Mammary epithelial cell (primary cell): ENCODE measurements at regions of chr17 and their contacts with region 1.

Region 1: DNA sequence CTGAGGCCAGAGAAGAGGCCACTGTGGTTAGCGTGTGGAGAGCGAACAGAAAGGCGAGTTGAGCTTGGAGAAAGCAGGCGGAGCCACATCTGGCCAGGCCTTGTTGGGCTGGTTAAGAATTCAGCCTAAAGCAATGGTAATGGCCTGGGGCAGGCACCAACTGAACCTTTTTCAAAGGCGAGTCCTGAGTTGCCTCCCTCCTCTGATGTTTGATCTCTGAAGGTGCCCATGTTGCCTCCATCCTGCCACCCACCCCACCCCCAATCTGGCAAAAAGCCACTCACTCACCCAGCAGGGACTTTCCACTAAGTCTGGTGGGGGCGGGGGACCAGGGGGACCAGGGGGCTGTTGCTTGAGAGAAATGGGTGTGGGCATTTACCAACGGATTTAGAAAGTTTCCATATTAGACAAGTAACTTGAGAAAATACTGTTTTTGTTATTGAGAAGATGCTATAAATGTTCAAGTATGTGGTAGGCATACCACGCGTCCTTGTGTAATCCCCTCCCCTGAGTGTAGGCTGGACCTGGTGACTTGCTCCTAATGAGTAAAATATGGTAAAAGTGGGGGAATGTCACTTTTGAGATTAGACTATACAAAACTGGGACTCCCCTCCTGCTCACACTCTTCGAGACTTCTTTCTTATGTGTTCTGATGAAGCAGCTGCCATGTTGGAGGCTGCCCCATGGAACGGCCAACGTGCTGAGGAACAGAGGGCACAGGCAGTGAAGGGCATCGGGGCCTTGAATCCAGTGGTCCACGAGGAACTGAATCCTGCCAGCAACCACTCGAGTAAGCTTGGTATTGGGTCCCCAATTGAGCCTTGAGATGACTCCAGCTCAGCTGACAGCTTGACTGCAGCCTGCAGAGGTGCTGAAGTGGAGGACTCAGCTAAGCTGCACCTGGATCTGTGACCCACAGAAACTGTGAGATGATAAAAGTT is 29.9 kb upstream of the TNS4 start:
- DNase-seq: no peak
- H3K4me3 ChIP-seq: no peak overlapping the region
- H3K27ac ChIP-seq: peak overlapping the region; percentile 36
- H3K4me1 ChIP-seq: peaks cover 36% of the 10 kb centered on the region
- H3K27me3 ChIP-seq: no peaks in the 10 kb centered on the region
- CTCF ChIP-seq: no peak

Region 2: GRCh38 chr17:40303009-40303657 is 228.2 kb before region 1 on chr17:
- CTCF ChIA-PET with region 1: interaction called, 18 read pairs
- dilution Hi-C with region 1: no loop called
- in situ Hi-C with region 1: no loop called
- intact Hi-C with region 1: no loop called
- DNase-seq: peak; percentile 45
- H3K4me3 ChIP-seq: no peak overlapping the region
- H3K27ac ChIP-seq: no peak overlapping the region
- H3K4me1 ChIP-seq: peaks cover 26% of the 10 kb centered on the region
- H3K27me3 ChIP-seq: no peaks in the 10 kb centered on the region
- CTCF ChIP-seq: peak; percentile 52 to 77

Region 3: GRCh38 chr17:40399185-40399584 is 132.1 kb before region 1 on chr17:
- CTCF ChIA-PET with region 1: interaction called, 3 read pairs
- dilution Hi-C with region 1: no loop called
- in situ Hi-C with region 1: no loop called
- intact Hi-C with region 1: loop called (anchors 1 kb)
- DNase-seq: no peak
- H3K4me3 ChIP-seq: no peak overlapping the region
- H3K27ac ChIP-seq: no peak overlapping the region
- H3K4me1 ChIP-seq: no peaks in the 10 kb centered on the region
- H3K27me3 ChIP-seq: no peaks in the 10 kb centered on the region
- CTCF ChIP-seq: peak; percentile 39 to 53

Region 4: GRCh38 chr17:40443583-40444327 is 87.6 kb before region 1 on chr17:
- CTCF ChIA-PET with region 1: interaction called, 23 read pairs
- dilution Hi-C with region 1: no loop called
- in situ Hi-C with region 1: no loop called
- intact Hi-C with region 1: loop called (anchors 1 kb)
- DNase-seq: peak; percentile 55
- H3K4me3 ChIP-seq: peak overlapping the region; percentile 25 to 60 (median 45)
- H3K27ac ChIP-seq: peak overlapping the region; percentile 0
- H3K4me1 ChIP-seq: peaks cover 34% of the 10 kb centered on the region
- H3K27me3 ChIP-seq: no peaks in the 10 kb centered on the region
- CTCF ChIP-seq: peak; percentile 41 to 68

Region 5: DNA sequence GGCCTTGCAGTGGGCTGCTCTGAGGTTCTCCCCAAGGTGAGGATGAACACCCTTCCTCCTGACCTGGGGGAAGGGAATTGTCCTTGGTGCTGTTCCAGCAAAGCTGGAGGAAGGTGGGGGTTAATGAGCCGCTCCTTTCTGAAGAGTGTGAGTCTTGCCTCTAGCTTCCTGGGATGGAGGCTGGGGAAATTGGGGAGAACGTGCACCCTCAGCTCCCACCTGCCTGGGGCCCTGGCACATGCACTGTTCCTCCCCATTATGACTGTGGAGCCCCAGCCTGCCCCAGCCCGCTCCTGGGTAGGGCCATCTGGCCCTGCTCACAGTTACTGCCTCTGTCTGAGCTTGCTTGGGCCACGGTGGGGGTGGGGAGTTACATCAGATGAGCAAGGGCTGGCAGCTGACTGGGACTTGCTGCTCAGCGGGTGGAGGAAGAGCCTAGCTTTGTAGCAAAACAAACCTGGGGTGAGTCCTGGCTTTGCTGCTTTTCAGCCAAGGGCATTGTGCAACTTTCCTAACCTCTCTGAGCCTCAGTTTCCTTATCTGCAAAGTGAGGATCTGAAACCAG is 41.0 kb before region 1 on chr17:
- CTCF ChIA-PET with region 1: no interaction called
- dilution Hi-C with region 1: no loop called
- in situ Hi-C with region 1: loop called (anchors 5 kb)
- intact Hi-C with region 1: no loop called
- DNase-seq: peak; percentile 85
- H3K4me3 ChIP-seq: no peak overlapping the region
- H3K27ac ChIP-seq: peak overlapping the region; percentile 96
- H3K4me1 ChIP-seq: peaks cover 97% of the 10 kb centered on the region
- H3K27me3 ChIP-seq: no peaks in the 10 kb centered on the region
- CTCF ChIP-seq: peak in 1 of 2 donors; percentile 1

Region 6: GRCh38 chr17:40582328-40582901 is 51.1 kb after region 1 on chr17:
- CTCF ChIA-PET with region 1: no interaction called
- dilution Hi-C with region 1: loop called (anchors 5 kb)
- in situ Hi-C with region 1: no loop called
- intact Hi-C with region 1: no loop called
- DNase-seq: peak; percentile 81
- H3K4me3 ChIP-seq: no peak overlapping the region
- H3K27ac ChIP-seq: peak overlapping the region; percentile 15
- H3K4me1 ChIP-seq: peaks cover 13% of the 10 kb centered on the region
- H3K27me3 ChIP-seq: no peaks in the 10 kb centered on the region
- CTCF ChIP-seq: no peak